Sciatic nerve (tissue), 2 donors: ENCODE measurements at regions of chr21 and their contacts with region 1.

Region 1: GRCh38 chr21:38355992-38356797 is 99.4 kb downstream of the KCNJ15 start:
- DNase-seq: peak; percentile 88
- ATAC-seq: peak; percentile 87

Region 2: DNA sequence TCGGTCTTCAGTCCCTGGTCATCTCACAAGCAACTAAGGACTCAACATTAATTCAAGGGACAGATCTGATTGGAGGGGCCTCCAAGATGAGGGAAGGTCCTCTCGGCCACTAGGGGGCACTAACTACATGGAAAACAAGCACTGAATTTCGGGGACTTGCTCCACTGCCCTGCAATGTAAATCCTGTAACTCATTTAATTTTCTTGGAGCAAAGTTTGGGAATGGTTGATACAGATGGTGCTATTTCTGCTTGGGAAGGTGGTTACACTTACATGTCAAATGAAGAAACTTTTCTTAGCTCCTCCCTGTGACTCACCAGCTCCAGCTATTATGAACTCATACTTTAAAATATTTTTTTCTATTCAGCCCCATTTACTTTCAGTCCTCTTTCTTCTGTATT is 196.8 kb before region 1 on chr21:
- intact Hi-C with region 1: loop called (anchors 10 kb)
- DNase-seq: peak; percentile 64
- ATAC-seq: peak; percentile 38

Region 3: DNA sequence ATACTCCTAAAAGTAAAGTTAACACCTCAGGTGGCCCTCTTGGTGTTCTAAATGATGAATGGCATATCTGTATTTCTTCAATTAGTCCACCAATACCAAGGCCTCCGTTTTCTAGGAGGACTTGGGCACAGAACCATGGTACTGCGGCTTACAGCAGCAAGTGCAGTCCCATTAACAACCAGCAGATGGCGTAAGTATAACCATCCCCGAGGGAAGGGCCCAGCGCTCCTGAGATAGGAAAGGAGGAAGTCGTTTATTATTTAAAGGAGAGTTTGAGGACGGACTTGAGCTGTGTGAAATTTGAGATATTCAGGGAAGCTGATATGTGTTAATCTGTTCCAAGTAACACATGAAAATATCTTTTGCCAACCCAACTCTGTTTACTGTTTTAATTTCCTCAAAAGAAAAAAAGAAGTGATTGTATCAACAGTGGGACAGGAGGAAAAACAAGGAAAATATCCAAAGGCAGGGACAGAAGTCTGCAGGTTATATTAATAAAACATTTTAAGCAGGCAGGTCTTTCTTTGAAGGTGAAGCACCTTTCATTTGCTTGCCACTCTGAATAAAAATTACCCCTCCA is 137.1 kb before region 1 on chr21:
- intact Hi-C with region 1: loop called (anchors 5 kb)
- DNase-seq: peak; percentile 79
- ATAC-seq: peak; percentile 83